ENCODE measurements at regions of chr9 and their contacts with region 1.

Region 1: DNA sequence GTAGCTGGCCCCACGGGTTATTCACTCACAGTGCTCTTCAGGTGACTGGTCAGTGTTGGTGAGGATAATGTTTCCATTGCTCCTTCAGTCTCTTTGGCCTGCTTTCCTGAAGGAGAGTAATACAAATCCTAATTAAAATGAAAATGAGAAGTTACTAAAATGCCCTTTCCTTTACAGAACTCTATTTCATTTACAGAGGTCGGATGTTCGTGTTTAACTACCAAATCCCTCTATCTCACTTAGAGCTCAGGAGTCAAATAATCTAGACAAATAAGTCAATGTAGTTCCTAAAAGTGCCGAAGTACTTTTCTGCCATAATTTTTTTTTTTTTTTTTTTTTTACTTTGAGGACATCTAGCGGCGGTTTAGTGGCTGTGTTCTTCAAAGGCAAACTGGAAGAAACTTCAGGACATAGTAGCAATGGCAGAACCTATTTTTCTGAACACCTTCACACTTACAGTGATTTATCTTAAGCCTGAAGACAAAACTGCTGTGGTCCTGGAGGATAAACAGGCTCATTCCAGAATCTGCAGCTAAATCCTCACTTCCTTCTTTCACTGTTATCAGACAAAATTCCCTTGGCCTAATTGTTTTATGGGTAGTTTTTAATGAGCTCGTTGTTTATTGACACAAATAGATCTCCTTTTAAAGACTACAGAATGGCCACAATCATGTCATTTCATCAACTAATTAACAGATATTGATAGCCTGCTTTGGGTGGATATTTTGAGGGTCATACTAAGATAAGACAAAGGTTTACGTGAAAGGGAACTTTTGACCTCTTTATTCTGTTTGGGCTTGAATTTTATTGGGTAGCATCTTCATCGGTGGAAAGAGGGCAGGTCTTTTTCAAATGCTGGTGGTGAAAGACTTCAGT is 207.6 kb upstream of the DMRTA1 start:
- H3K4me3 ChIP-seq: peak overlapping the region; percentile 9; the same call in 1 of the 2 replicates
- H3K27ac ChIP-seq: peak overlapping the region; percentile 81
- H3K4me1 ChIP-seq: peaks cover 22% of the 10 kb centered on the region
- CTCF ChIP-seq: no peak

Region 2: GRCh38 chr9:21465859-21466518 is 773.1 kb before region 1 on chr9:
- CTCF ChIA-PET with region 1: no interaction called
- POLR2A ChIA-PET with region 1: no interaction called
- H3K4me3 ChIP-seq: no peak overlapping the region
- H3K27ac ChIP-seq: no peak overlapping the region
- H3K4me1 ChIP-seq: no peaks in the 10 kb centered on the region
- CTCF ChIP-seq: no peak

Region 3: GRCh38 chr9:22037954-22038690 is 200.9 kb before region 1 on chr9:
- CTCF ChIA-PET with region 1: interaction called, 21 read pairs
- POLR2A ChIA-PET with region 1: no interaction called
- H3K4me3 ChIP-seq: no peak overlapping the region
- H3K27ac ChIP-seq: no peak overlapping the region
- H3K4me1 ChIP-seq: peaks cover 10% of the 10 kb centered on the region; the same call in 1 of the 2 replicates
- CTCF ChIP-seq: no peak

Region 4: DNA sequence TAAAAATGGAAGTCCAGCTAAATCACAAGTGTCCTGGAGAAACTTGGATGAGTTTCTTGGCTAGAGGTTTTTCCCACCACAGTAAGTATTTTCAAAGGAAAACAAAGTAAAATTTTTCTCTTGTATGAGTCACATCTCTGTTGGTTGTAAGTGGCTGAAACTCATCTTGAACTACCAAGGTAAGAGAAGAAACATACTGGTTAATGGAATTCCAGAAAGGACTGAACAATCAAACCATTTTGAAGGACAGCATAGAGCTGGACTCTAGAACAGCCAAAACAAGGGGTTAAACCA is 127.1 kb before region 1 on chr9:
- CTCF ChIA-PET with region 1: interaction called, 14 read pairs
- POLR2A ChIA-PET with region 1: no interaction called
- H3K4me3 ChIP-seq: no peak overlapping the region
- H3K27ac ChIP-seq: no peak overlapping the region
- H3K4me1 ChIP-seq: peaks cover 12% of the 10 kb centered on the region
- CTCF ChIP-seq: no peak

Region 5: GRCh38 chr9:22147813-22148524 is 91.1 kb before region 1 on chr9:
- CTCF ChIA-PET with region 1: interaction called, 24 read pairs
- POLR2A ChIA-PET with region 1: interaction called, 3 read pairs
- H3K4me3 ChIP-seq: no peak overlapping the region
- H3K27ac ChIP-seq: no peak overlapping the region
- H3K4me1 ChIP-seq: peaks cover 2% of the 10 kb centered on the region; the same call in 1 of the 2 replicates
- CTCF ChIP-seq: no peak; the same call in 1 of the 2 replicates

Region 6: GRCh38 chr9:22332202-22332601 is 93.2 kb after region 1 on chr9:
- CTCF ChIA-PET with region 1: no interaction called
- POLR2A ChIA-PET with region 1: no interaction called
- H3K4me3 ChIP-seq: no peak overlapping the region
- H3K27ac ChIP-seq: no peak overlapping the region
- H3K4me1 ChIP-seq: no peaks in the 10 kb centered on the region
- CTCF ChIP-seq: no peak

Measured in HEK293 (cell line).